A549 (cell line): ENCODE measurements at regions of chr17 and their contacts with region 1.

Region 1: GRCh38 chr17:1087381-1088241 is 90.7 kb downstream of the TIMM22 start:
- DNase-seq: peak; percentile 64 to 84
- ATAC-seq: peak; percentile 81 to 85
- H3K4me3 ChIP-seq: peak overlapping the region; percentile 25; the same call in 2 of the 3 replicates
- H3K27ac ChIP-seq: peak overlapping the region; percentile 81 to 89
- H3K4me1 ChIP-seq: peaks cover 27% of the 10 kb centered on the region
- CTCF ChIP-seq: no peak
- EP300 ChIP-seq: no peak
- POLR2A ChIP-seq: no peak; the same call in 1 of the 2 replicates
- RAD21 ChIP-seq: no peak

Region 2: GRCh38 chr17:1098387-1098786 is 10.8 kb after region 1 on chr17:
- CTCF ChIA-PET with region 1: interaction called, 12 read pairs
- POLR2A ChIA-PET with region 1: no interaction called
- DNase-seq: no peak
- ATAC-seq: peak; percentile 37 to 63; a peak in 5 of 6 replicates
- H3K4me3 ChIP-seq: no peak overlapping the region
- H3K27ac ChIP-seq: no peak overlapping the region
- H3K4me1 ChIP-seq: no peaks in the 10 kb centered on the region
- CTCF ChIP-seq: no peak
- EP300 ChIP-seq: no peak
- POLR2A ChIP-seq: no peak
- RAD21 ChIP-seq: no peak